ENCODE measurements at regions of chr6 and their contacts with region 1.

Region 1: DNA sequence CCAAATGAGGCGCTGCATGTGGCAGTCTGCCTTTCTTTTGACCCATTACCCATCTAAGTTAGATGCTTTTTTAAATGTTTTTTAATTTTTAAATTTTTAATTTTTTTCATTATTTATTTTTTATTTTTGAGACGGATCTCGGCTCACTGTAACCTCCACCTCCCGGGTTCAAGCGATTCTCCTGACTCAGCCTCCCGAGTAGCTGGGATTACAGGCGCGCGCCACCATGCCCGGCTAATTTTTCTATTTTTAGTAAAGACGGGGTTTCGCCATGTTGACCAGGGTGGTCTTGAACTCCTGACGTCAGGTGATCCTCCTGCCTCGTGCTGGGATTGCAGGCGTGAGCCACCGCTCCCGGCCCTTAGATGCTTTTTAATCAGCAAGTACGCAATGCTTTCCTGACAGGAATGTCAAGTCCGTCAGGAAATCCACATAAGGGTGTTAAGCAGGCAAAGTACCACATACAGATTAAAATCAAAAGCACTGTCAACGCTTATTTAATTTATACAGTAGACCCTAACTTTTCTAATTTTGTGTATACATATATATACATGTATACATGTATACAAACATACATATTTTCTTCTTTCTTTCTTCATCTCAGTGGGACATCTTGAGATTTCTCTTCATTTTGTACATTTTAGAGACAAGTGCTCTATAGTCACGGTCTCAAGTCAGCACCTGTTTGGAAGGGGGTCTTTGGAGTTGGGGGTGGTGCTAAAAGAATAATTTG is 995 bp upstream of the GSTA4 start:
- DNase-seq: peak in 4 of 5 donors; percentile 6 to 54 (median 28)
- H3K4me3 ChIP-seq: peak overlapping the region; percentile 79
- H3K4me3 Mint-ChIP-seq: peak overlapping the region; percentile 88 to 96 (median 91)
- H3K27ac ChIP-seq: no peak overlapping the region
- H3K27ac Mint-ChIP-seq: peak overlapping the region; percentile 81 to 100 (median 98)
- H3K4me1 ChIP-seq: peaks cover 9% of the 10 kb centered on the region
- H3K4me1 Mint-ChIP-seq: peaks cover 18 to 34% (median 27%) of the 10 kb centered on the region in 3 donors
- H3K27me3 ChIP-seq: no peaks in the 10 kb centered on the region
- H3K27me3 Mint-ChIP-seq: peaks cover 4 to 13% of the 10 kb centered on the region in 2 donors

Region 2: GRCh38 chr6:52984247-52984646 is 11.8 kb before region 1 on chr6:
- CTCF ChIA-PET with region 1: interaction called, 32 read pairs
- POLR2A ChIA-PET with region 1: interaction called, 13 read pairs
- DNase-seq: peak; percentile 16 to 78 (median 67)
- H3K4me3 ChIP-seq: peak overlapping the region; percentile 19
- H3K4me3 Mint-ChIP-seq: peak overlapping the region; percentile 29 to 81 (median 76)
- H3K27ac ChIP-seq: no peak overlapping the region
- H3K27ac Mint-ChIP-seq: peak overlapping the region in 4 of 8 donors; percentile 31 to 89 (median 58)
- H3K4me1 ChIP-seq: peaks cover 30% of the 10 kb centered on the region
- H3K4me1 Mint-ChIP-seq: peaks cover 34 to 44% (median 35%) of the 10 kb centered on the region in 3 donors
- H3K27me3 ChIP-seq: no peaks in the 10 kb centered on the region
- H3K27me3 Mint-ChIP-seq: peaks cover 4 to 18% of the 10 kb centered on the region in 2 donors

Region 3: DNA sequence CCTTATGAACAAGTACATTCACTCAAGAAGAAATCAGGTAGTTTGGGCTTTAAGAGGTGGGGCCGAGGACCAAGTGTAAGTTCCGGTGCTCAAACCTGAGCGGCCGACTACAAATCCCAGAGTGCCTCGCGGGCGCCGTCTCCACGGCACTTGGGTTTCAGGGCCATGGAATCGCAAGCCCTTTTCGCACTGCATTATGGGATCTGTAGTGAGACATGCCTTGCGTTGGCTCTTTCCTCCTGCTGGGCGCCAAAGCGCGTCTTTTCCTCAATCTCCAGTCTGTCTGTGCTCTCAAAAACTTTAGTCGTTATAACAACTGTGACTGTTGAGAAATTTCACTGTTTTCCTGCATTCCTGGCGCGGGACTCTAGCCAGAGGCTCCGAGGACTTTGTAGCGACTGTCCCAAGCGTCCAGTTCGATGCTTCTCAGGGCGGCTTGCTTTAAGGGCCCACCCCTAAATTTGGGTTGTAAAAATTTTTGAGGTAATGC is 68.7 kb after region 1 on chr6:
- CTCF ChIA-PET with region 1: interaction called, 11 read pairs
- POLR2A ChIA-PET with region 1: interaction called, 3 read pairs
- DNase-seq: peak; percentile 93 to 97 (median 94)
- H3K4me3 ChIP-seq: peak overlapping the region; percentile 98
- H3K4me3 Mint-ChIP-seq: peak overlapping the region; percentile 96 to 100 (median 99)
- H3K27ac ChIP-seq: peak overlapping the region; percentile 88
- H3K27ac Mint-ChIP-seq: peak overlapping the region; percentile 58 to 99 (median 97)
- H3K4me1 ChIP-seq: peaks cover 44% of the 10 kb centered on the region
- H3K4me1 Mint-ChIP-seq: peaks cover 58 to 72% (median 64%) of the 10 kb centered on the region in 3 donors
- H3K27me3 ChIP-seq: no peaks in the 10 kb centered on the region
- H3K27me3 Mint-ChIP-seq: no peaks in the 10 kb centered on the region